ENCODE measurements at regions of chr1 and their contacts with region 1.

Region 1: GRCh38 chr1:117929173-117929989 is at the starts of genes GDAP2 and WDR3:
- DNase-seq: peak; percentile 90 to 98 (median 95)
- ATAC-seq: peak; percentile 90
- H3K4me3 ChIP-seq: peak within 1 kb of the TSS; percentile 83 to 89
- H3K4me3 Mint-ChIP-seq: peak within 1 kb of the TSS; percentile 94
- H3K27ac ChIP-seq: peak within 1 kb of the TSS; percentile 83 to 94
- H3K27ac Mint-ChIP-seq: peak within 1 kb of the TSS; percentile 97
- H3K4me1 ChIP-seq: peaks cover 37% of the 10 kb centered on the region
- H3K4me1 Mint-ChIP-seq: peaks cover 63% of the 10 kb centered on the region
- H3K27me3 ChIP-seq: no peaks in the 10 kb centered on the region
- H3K27me3 Mint-ChIP-seq: no peaks in the 10 kb centered on the region
- CTCF ChIP-seq: no peak
- total RNA-seq, gene GDAP2: 24.9 to 28.0 TPM
- total RNA-seq, gene WDR3: 5.7 to 6.1 TPM

Region 2: DNA sequence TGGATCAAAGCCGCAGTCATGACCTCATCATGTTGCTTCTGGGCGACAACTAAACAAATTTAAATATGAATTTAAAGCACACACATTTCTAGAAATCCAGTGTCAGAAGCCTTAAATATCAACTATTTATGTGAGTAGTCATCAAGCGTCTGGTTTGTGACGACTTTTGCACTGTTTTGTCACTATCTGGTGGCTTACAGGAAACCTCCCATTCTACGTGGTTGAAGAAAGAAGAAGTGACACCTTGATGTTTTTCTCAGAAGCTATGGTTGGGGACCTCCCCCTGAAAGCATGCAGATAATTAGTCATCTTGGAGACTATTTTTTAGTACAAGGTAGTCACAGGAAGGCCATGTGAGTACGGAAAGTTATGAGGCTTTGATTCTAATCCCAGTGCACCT is 265.1 kb before region 1 on chr1:
- CTCF ChIA-PET with region 1: no interaction called
- POLR2A ChIA-PET with region 1: no interaction called
- intact Hi-C with region 1: loop called in 1 of 2 experiments (anchors 5 kb)
- DNase-seq: peak in 7 of 9 experiments; percentile 30 to 96 (median 59)
- ATAC-seq: peak; percentile 77
- H3K4me3 ChIP-seq: no peak overlapping the region
- H3K4me3 Mint-ChIP-seq: no peak overlapping the region
- H3K27ac ChIP-seq: peak overlapping the region; percentile 44 to 84
- H3K27ac Mint-ChIP-seq: peak overlapping the region; percentile 85
- H3K4me1 ChIP-seq: peaks cover 53% of the 10 kb centered on the region
- H3K4me1 Mint-ChIP-seq: peaks cover 72% of the 10 kb centered on the region
- H3K27me3 ChIP-seq: no peaks in the 10 kb centered on the region
- H3K27me3 Mint-ChIP-seq: peaks cover 17% of the 10 kb centered on the region
- CTCF ChIP-seq: no peak

Region 3: DNA sequence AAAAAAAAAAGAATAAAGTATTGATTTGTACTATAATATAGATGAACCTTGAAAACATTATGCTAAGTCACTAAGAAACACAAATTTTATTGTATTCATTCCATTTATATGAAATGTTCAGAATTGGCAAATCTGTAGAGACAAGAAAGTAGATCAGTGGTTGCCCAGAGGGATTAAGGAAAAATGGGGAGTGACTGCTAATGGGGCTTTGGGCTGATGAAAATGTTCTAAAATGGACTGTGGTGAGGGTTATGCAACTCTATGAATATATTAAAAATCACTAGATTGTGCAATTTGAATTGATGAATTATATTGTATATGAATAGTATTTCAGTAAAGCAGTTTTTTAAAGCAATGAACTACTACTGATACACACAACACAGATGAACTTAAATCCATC is 10.0 kb before region 1 on chr1:
- CTCF ChIA-PET with region 1: interaction called, 4 read pairs
- POLR2A ChIA-PET with region 1: interaction called, 11 read pairs
- intact Hi-C with region 1: no loop called
- DNase-seq: no peak
- ATAC-seq: no peak
- H3K4me3 ChIP-seq: no peak overlapping the region
- H3K4me3 Mint-ChIP-seq: no peak overlapping the region
- H3K27ac ChIP-seq: no peak overlapping the region
- H3K27ac Mint-ChIP-seq: no peak overlapping the region
- H3K4me1 ChIP-seq: no peaks in the 10 kb centered on the region
- H3K4me1 Mint-ChIP-seq: peaks cover 5% of the 10 kb centered on the region
- H3K27me3 ChIP-seq: no peaks in the 10 kb centered on the region
- H3K27me3 Mint-ChIP-seq: no peaks in the 10 kb centered on the region
- CTCF ChIP-seq: no peak

Region 4: GRCh38 chr1:117970252-117970651 is 40.9 kb after region 1 on chr1:
- CTCF ChIA-PET with region 1: no interaction called
- POLR2A ChIA-PET with region 1: no interaction called
- intact Hi-C with region 1: no loop called
- DNase-seq: no peak
- ATAC-seq: no peak
- H3K4me3 ChIP-seq: no peak overlapping the region
- H3K4me3 Mint-ChIP-seq: no peak overlapping the region
- H3K27ac ChIP-seq: no peak overlapping the region
- H3K27ac Mint-ChIP-seq: no peak overlapping the region
- H3K4me1 ChIP-seq: no peaks in the 10 kb centered on the region
- H3K4me1 Mint-ChIP-seq: no peaks in the 10 kb centered on the region
- H3K27me3 ChIP-seq: no peaks in the 10 kb centered on the region
- H3K27me3 Mint-ChIP-seq: peaks cover 7% of the 10 kb centered on the region
- CTCF ChIP-seq: no peak

Region 5: DNA sequence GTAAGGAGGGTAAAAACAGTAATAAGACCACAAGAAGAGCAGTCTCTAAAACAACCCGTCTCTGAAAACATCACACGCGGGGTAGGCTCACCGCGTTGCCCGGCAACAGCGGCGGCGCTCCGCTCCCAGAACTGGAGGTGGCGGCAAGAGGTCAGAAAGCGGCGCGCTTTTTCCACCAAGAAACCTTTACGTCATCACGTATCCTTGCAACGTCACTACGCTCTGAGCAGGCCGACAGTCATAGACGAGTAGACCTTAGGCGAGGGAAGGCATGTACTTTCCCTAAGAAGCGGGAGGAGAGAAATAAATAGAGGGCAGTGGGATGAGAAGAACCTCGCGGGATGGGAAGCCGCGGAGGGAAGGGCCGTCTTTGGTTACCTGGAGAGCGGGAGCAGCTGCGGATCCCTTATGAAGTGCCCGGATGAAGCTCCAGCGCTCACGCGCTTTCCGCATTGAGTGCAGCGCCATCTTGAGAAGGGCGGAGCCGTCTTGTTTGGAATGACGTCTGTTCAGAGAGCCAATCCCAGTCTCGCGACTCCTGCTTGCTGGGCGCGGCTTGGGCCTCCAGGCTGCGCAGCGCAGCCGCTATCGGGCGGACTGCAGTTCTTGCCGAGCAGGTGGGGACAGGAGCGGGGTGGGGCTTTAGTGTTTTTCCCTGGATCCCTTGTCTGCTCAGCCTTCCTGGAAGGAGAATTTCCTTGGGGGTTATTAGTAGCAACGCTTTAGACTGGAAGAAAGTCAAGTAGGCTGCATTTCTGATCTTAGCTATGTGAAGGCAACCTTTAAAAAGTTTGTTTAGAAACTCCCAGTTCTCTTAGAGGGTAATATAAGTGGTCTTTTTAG is 1211.0 kb after region 1 on chr1 and contains the start of gene WARS2:
- CTCF ChIA-PET with region 1: no interaction called
- POLR2A ChIA-PET with region 1: no interaction called
- intact Hi-C with region 1: loop called in 1 of 2 experiments (anchors 2 kb)
- DNase-seq: peak; percentile 88 to 99 (median 94)
- ATAC-seq: peak; percentile 91
- H3K4me3 ChIP-seq: peak within 1 kb of the TSS; percentile 67 to 73
- H3K4me3 Mint-ChIP-seq: no peak within 1 kb of the TSS
- H3K27ac ChIP-seq: peak within 1 kb of the TSS; percentile 99
- H3K27ac Mint-ChIP-seq: no peak within 1 kb of the TSS
- H3K4me1 ChIP-seq: peaks cover 26% of the 10 kb centered on the region
- H3K4me1 Mint-ChIP-seq: peaks cover 27% of the 10 kb centered on the region
- H3K27me3 ChIP-seq: no peaks in the 10 kb centered on the region
- H3K27me3 Mint-ChIP-seq: no peaks in the 10 kb centered on the region
- CTCF ChIP-seq: no peak
- total RNA-seq, gene WARS2: 18.8 to 21.0 TPM

Measured in CD8-positive, alpha-beta T cell (primary cell).